Activated T-helper 1 cell treated with anti-CD3 and anti-CD28 coated beads, Interleukin-12 subunit alpha, Interleukin-12 subunit beta, Interleukin-2, Interleukin-4 antibody, amounts not matched to agents 30 ng/mL and 10 ng/mL and 1 ng/mL, durations not matched to agents 14 hours and 24 hours and 36 hours (primary cell): ENCODE measurements at regions of chr14 and their contacts with region 1.

Region 1: DNA sequence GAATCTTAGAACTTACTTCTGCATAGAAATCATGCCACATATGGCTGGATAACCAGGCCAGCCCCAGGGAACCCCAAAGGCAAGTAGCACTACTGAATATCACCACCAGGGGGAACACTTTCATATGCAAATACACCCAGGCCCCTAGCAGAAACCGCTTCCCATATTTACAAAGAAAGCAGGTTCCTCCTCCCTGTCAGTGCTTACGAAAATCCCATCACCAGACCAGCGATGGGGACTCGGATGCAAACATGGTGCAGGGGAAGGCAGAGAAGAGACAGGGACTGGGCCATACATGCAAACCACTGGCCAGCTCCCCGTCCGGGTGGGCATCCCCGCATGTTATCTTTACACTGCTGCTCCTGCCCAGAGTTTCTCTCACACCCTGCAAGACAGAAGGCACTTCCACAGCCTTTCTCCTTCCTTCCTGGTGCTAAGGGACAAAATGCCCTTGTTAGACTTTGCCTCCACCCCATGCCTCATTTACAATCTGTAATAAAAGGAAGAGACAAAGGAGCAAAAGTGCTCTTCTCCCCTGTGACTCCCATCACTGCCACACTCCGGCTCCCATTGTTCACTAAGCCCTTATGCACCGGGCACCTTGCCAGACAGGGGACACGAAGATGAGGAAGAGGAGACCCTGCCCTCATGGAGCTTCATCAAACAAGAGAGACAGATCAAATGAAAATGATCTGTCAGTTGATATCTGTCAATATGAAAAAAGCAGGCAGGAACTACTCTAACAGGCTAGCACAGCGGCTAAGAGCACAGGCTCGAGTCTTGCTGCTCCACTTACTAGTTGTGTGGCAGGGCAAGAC is 62.3 kb downstream of the PTPN21 start:
- DNase-seq: peak; percentile 48
- H3K4me3 Mint-ChIP-seq: no peak overlapping the region
- H3K27ac Mint-ChIP-seq: no peak overlapping the region
- H3K4me1 Mint-ChIP-seq: peaks cover 4% of the 10 kb centered on the region
- H3K27me3 Mint-ChIP-seq: peaks cover 8% of the 10 kb centered on the region

Region 2: DNA sequence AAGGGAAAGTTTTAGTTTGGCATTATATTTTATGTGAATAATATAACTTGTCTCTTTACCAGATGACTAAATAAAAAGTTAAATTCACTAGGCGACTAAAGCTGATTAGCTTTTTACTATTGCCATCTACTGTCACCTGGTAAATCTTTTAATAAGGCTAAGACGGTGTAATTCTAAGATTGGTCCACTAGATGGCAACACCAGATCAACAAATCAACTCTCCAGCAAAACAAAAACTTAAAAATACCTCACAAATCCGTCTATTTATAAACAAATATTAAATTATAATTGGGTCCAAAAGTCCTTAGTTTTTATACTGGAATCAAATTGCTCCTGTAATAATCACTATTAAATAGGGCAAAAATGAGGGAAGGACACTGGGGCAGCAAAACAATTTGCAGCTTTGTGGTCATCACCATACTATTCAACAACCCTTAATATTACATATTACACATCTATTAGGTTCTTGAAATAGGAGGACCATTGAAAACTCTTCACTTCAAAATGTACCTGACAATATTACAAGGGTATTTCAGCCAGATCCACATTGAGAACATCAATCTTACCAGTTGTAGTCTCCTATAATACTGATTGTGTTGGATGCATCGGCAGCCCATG is 547.4 kb before region 1 on chr14:
- intact Hi-C with region 1: loop called (anchors 1 kb)
- DNase-seq: no peak
- H3K4me3 Mint-ChIP-seq: no peak overlapping the region
- H3K27ac Mint-ChIP-seq: no peak overlapping the region
- H3K4me1 Mint-ChIP-seq: no peaks in the 10 kb centered on the region
- H3K27me3 Mint-ChIP-seq: no peaks in the 10 kb centered on the region

Region 3: DNA sequence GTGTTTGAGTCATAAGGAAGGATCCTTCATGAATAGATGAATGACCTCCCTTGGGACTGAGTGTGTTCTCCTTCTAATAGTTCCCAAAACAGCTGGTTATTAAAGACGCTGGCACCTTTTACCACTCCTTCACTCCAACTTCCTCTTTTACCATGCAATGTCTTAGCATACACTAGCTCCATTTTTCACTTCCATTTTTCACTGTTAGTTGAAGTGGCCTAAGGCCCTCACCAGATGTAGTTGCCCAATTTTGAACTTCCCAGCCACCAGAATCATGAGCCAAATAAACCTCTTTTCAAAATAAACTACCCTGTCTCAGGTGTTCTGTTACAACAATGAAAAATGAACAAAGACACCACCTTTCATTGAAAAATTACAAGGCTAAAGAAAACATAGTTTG is 422.8 kb before region 1 on chr14:
- intact Hi-C with region 1: no loop called
- DNase-seq: no peak
- H3K4me3 Mint-ChIP-seq: no peak overlapping the region
- H3K27ac Mint-ChIP-seq: no peak overlapping the region
- H3K4me1 Mint-ChIP-seq: no peaks in the 10 kb centered on the region
- H3K27me3 Mint-ChIP-seq: peaks cover 14% of the 10 kb centered on the region

Region 4: GRCh38 chr14:88551094-88551870 is 58.8 kb after region 1 on chr14:
- intact Hi-C with region 1: loop called (anchors 1 kb)
- DNase-seq: peak; percentile 23
- H3K4me3 Mint-ChIP-seq: peak overlapping the region; percentile 77
- H3K27ac Mint-ChIP-seq: no peak overlapping the region
- H3K4me1 Mint-ChIP-seq: peaks cover 11% of the 10 kb centered on the region
- H3K27me3 Mint-ChIP-seq: peaks cover 38% of the 10 kb centered on the region

Region 5: GRCh38 chr14:88792572-88793258 is 300.2 kb after region 1 on chr14 and contains the start of gene EML5:
- intact Hi-C with region 1: loop called (anchors 10 kb)
- DNase-seq: peak; percentile 75
- H3K4me3 Mint-ChIP-seq: peak within 1 kb of the TSS; percentile 82
- H3K27ac Mint-ChIP-seq: peak within 1 kb of the TSS; percentile 71
- H3K4me1 Mint-ChIP-seq: peaks cover 13% of the 10 kb centered on the region
- H3K27me3 Mint-ChIP-seq: peaks cover 31% of the 10 kb centered on the region
- total RNA-seq, gene EML5: 1.5 and 1.7 TPM in 2 replicates

Region 6: DNA sequence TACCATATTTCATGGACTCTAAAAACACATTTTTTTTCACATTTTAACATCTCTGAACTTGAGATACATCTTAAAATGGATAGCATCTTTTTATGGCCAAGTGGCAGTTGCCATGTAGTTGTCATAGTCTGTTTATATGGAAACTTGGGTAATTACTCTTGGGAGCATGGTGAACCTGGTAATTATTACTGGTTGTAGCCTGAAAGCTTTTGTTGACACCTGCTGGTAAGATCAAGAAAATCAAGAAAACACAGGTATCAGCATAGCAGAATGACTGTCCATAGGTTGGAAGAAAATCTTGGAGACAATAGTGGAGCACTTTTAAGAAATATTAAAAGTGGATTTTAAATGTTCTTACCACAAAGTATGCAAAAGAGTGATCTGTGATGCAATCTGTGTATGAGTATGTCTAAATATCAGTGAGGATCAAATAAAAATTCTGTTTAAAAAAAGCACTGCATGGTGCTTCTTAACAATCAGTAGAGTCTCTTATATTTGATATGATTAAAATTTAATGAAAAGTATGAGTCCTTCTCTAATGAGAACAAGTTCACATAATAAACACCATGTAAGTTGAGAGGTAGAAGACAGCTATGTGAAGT is 376.2 kb after region 1 on chr14:
- intact Hi-C with region 1: loop called (anchors 1 kb)
- DNase-seq: no peak
- H3K4me3 Mint-ChIP-seq: no peak overlapping the region
- H3K27ac Mint-ChIP-seq: no peak overlapping the region
- H3K4me1 Mint-ChIP-seq: no peaks in the 10 kb centered on the region
- H3K27me3 Mint-ChIP-seq: peaks cover 2% of the 10 kb centered on the region

Region 7: DNA sequence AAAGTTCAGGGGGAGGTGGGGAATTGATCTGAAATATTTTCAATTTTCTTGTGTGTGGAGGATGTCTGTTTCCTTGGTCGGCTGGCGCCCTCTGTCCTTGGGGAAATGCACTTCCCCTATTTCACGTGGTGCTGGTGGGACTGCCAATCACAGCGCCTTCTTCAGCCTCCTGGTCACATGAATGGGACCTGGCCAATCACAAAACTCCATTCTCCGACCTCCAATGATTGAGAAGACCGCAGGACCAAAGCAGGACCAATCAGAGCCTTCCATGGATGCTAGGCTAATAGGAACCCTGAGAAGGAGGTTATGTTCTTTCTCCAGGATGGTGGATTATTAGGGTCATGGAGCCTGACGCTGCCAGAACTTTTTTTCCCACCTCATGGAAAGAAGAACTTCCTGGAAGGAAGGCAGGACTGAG is 520.6 kb after region 1 on chr14:
- intact Hi-C with region 1: loop called (anchors 2 kb)
- DNase-seq: no peak
- H3K4me3 Mint-ChIP-seq: no peak overlapping the region
- H3K27ac Mint-ChIP-seq: no peak overlapping the region
- H3K4me1 Mint-ChIP-seq: no peaks in the 10 kb centered on the region
- H3K27me3 Mint-ChIP-seq: peaks cover 12% of the 10 kb centered on the region

Region 8: DNA sequence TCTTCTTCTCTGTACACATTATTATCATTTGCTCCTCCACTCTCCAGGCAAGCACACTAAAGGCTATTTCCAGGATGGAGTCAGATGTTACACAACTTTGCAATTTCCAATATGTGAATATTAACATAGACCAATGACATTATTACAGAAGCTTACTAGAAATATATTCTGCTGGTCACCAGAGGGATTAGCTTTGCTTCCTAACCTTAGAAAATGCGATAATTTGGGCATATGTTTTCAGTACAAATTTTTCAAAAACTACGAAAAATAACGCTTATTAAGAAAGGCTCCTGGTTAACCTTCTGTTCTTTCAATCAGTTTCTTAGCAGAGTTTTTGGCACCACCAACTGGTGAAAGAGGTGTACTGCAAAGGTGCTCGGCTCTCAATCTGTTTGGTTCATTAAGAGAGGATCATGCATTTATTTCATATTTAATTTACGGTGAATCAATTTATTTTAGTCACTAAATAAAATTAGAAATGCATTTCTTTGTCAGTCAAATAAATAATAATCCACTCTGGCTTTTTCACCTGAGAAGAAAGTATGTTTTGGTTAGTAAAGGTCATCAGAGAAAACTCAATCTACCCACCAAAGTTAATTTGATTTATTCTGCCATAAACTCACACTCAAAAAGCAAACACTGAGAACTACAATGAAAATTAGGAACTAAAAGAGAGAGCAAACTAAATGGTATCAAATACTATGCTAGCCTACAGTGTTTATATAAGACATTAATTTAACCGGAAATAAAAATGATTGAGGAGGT is 1422.8 kb after region 1 on chr14:
- intact Hi-C with region 1: loop called (anchors 1 kb)
- DNase-seq: peak; percentile 38
- H3K4me3 Mint-ChIP-seq: no peak overlapping the region
- H3K27ac Mint-ChIP-seq: no peak overlapping the region
- H3K4me1 Mint-ChIP-seq: peaks cover 4% of the 10 kb centered on the region
- H3K27me3 Mint-ChIP-seq: peaks cover 12% of the 10 kb centered on the region